ENCODE measurements at regions of chr18 and their contacts with region 1.

Region 1: GRCh38 chr18:57434536-57435494 is at the start of gene ONECUT2:
- DNase-seq: peak; percentile 100
- H3K4me3 Mint-ChIP-seq: peak within 1 kb of the TSS; percentile 96
- H3K27ac Mint-ChIP-seq: peak within 1 kb of the TSS; percentile 79
- H3K4me1 Mint-ChIP-seq: no peaks in the 10 kb centered on the region
- H3K27me3 Mint-ChIP-seq: no peaks in the 10 kb centered on the region
- CTCF ChIP-seq: no peak
- total RNA-seq, gene ONECUT2: 182 and 209 TPM in 2 replicates

Region 2: DNA sequence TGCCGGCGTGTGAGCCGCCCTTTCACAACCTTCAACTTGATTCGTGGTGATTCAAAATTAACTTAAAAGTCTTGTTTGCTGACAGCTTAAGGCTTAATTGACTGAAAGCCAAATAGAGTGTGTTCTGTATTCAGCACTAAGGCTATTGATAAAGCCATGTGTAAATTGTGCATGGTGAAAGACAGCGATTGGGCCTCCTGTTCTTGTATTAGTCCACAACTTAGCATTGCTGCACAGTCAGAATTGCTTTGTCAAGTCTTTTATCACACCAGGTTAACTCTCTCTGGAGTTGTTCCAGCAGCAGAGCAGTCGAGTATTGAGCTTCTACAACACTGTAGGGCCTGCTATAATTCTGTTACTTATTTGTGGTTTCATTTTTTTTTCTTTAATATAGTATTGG is 573.6 kb before region 1 on chr18:
- CTCF ChIA-PET with region 1: interaction called, 5 read pairs
- intact Hi-C with region 1: loop called (anchors 2 kb)
- DNase-seq: peak; percentile 41
- H3K4me3 Mint-ChIP-seq: peak overlapping the region; percentile 37
- H3K27ac Mint-ChIP-seq: peak overlapping the region; percentile 33
- H3K4me1 Mint-ChIP-seq: peaks cover 17% of the 10 kb centered on the region
- H3K27me3 Mint-ChIP-seq: no peaks in the 10 kb centered on the region
- CTCF ChIP-seq: no peak

Region 3: DNA sequence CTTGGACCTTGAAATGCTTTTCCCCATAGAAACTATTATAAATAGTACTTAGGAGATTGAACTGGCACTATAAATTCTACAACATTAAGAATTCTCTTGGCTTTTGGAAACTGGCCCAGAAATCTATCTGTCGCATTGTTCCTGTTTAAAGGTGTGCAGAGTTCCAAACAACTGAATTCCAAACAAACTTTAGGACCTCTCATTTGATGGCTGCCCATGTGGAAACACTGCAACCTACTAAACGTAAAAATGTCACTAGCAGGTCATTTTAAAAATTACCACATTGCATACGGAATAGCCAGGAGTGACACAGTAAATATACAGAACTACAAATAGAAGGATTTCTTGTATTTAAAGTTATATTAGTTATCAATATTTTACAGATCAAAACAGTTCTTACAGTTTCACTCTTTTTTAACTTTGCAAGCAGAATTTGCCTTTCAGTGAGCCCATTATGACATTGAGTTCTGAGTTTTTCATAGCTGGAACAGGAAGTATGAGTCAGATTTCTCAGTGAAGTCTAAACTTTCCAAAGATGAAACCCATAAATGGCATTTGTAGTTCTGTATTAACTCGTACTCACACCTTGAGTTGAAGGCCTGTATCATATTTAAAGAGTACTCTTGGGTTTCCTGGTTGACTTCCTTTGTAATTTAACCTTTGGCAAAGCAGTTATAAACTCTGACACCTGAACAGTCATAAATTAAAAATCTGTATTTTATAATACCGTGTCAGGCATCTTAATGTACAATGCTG is 430.3 kb before region 1 on chr18:
- CTCF ChIA-PET with region 1: no interaction called
- intact Hi-C with region 1: loop called (anchors 5 kb)
- DNase-seq: no peak
- H3K4me3 Mint-ChIP-seq: peak overlapping the region; percentile 39
- H3K27ac Mint-ChIP-seq: peak overlapping the region; percentile 87
- H3K4me1 Mint-ChIP-seq: peaks cover 34% of the 10 kb centered on the region
- H3K27me3 Mint-ChIP-seq: no peaks in the 10 kb centered on the region
- CTCF ChIP-seq: no peak

Region 4: GRCh38 chr18:57051657-57052044 is 383.2 kb before region 1 on chr18:
- CTCF ChIA-PET with region 1: no interaction called
- intact Hi-C with region 1: loop called (anchors 2 kb)
- DNase-seq: peak; percentile 59
- H3K4me3 Mint-ChIP-seq: no peak overlapping the region
- H3K27ac Mint-ChIP-seq: peak overlapping the region; percentile 95
- H3K4me1 Mint-ChIP-seq: peaks cover 30% of the 10 kb centered on the region
- H3K27me3 Mint-ChIP-seq: no peaks in the 10 kb centered on the region
- CTCF ChIP-seq: no peak

Region 5: DNA sequence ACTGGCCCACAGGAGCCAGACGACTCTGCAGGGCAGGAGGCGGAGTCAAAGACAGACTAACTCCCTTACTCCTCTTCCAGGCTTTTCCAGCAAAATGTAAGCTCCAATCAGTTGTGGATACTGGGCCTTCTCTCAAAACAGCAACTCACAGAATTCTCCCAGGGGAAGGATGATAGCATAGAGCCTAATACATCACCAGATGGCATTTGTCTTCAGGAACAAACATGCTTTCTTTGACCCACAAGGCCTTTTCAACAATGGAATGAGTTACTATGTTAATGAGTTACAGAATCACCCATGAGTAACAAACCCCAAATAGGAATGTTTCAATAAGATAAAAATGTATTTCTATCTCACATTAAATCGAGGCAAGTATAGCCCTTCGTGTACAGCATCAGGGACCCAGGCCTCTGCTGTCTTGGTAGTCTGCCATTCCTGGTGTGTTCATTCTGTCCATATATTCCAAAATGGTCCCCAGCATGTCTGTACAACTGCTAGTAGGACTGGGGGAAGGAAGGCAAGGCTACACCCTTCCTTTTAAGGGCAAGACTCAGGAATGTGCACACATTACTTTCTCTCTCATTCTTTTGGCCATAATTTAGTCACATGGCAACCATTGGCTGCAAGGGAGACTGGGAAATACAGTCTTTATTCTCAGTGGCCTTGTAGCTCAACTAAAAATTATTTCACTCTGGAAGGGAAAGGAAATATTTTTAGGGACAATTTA is 211.5 kb before region 1 on chr18:
- CTCF ChIA-PET with region 1: no interaction called
- intact Hi-C with region 1: loop called (anchors 1 kb)
- DNase-seq: peak; percentile 50
- H3K4me3 Mint-ChIP-seq: peak overlapping the region; percentile 7
- H3K27ac Mint-ChIP-seq: peak overlapping the region; percentile 82
- H3K4me1 Mint-ChIP-seq: peaks cover 34% of the 10 kb centered on the region
- H3K27me3 Mint-ChIP-seq: no peaks in the 10 kb centered on the region
- CTCF ChIP-seq: no peak

Region 6: DNA sequence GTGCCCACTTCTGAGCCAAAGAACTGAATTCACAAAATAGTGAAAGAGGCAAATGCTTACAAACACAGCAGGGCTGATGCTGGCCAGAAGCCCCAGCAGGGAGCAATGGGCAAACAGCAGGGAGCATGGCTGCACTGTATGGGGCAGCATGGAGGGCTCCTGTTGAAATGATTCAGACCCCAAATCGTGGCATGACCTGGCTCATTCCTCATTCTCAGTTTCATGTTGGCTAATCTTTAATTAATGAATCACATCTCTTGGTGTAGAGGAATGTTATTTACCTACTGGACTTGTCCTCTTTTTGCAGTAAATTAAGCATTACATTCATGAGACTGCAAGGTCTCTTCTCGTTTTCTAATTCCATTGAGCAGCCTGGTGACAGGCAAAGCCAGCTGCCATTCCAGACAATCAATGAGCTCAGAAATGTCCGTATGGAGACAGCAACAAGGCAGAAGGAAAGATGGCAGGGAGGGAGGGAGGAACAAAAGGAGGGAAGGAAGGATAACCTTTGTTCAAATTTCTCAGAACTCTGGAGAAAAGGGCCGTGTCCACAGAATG is 167.4 kb before region 1 on chr18:
- CTCF ChIA-PET with region 1: no interaction called
- intact Hi-C with region 1: loop called (anchors 1 kb)
- DNase-seq: peak; percentile 55
- H3K4me3 Mint-ChIP-seq: peak overlapping the region; percentile 29
- H3K27ac Mint-ChIP-seq: peak overlapping the region; percentile 97
- H3K4me1 Mint-ChIP-seq: peaks cover 68% of the 10 kb centered on the region
- H3K27me3 Mint-ChIP-seq: no peaks in the 10 kb centered on the region
- CTCF ChIP-seq: no peak

Region 7: DNA sequence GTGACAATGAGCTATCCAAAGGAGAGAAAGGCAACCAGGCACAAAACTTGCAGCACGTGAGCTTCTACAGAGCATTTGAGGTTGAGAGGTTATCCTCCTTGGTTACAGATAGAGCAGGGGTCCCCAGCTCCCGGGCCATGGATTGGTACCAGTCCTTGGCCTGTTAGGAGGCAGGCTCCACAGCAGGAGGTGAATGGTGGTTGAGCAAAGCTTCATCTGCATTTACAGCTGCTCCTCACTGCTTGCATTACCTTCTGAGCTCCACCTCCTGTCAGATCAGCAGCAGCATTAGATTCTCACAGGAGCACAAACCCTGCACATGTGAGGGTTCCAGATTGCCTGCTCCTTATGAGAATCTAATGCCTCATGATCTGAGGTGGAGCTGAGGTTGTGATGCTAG is 140.3 kb before region 1 on chr18:
- CTCF ChIA-PET with region 1: no interaction called
- intact Hi-C with region 1: no loop called
- DNase-seq: no peak
- H3K4me3 Mint-ChIP-seq: no peak overlapping the region
- H3K27ac Mint-ChIP-seq: no peak overlapping the region
- H3K4me1 Mint-ChIP-seq: no peaks in the 10 kb centered on the region
- H3K27me3 Mint-ChIP-seq: no peaks in the 10 kb centered on the region
- CTCF ChIP-seq: no peak

Region 8: DNA sequence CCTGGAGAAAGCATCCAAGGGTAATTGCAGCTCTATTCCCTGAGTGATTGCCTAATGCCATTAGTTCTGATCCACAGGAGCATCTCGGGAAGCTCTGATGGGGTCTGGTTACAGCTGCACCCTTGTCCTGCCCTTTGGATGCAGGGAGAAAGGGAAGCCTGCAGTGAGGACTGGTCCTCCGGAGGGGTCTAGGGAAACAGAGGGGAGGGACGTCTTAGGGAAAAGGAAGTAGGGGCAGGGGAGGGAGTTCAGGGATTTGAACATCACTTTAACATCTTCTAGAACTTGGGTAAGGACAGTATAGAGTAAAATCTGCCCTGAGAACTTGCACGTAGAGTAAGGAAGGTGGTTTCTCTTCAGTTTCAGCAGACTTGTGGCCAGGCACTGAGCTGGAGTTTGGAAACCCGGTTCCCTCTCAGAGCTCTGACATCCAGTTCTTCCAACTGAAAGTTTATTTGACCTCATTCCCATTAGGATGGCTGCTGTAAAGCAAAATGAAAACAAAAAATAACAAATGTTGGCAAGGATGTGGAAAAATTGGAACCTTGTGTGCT is 20.8 kb after region 1 on chr18:
- CTCF ChIA-PET with region 1: no interaction called
- intact Hi-C with region 1: no loop called
- DNase-seq: no peak
- H3K4me3 Mint-ChIP-seq: no peak overlapping the region
- H3K27ac Mint-ChIP-seq: peak overlapping the region; percentile 36
- H3K4me1 Mint-ChIP-seq: peaks cover 36% of the 10 kb centered on the region
- H3K27me3 Mint-ChIP-seq: no peaks in the 10 kb centered on the region
- CTCF ChIP-seq: no peak

Region 9: GRCh38 chr18:57497372-57498294 is 62.8 kb after region 1 on chr18:
- CTCF ChIA-PET with region 1: interaction called, 11 read pairs
- intact Hi-C with region 1: no loop called
- DNase-seq: no peak
- H3K4me3 Mint-ChIP-seq: no peak overlapping the region
- H3K27ac Mint-ChIP-seq: no peak overlapping the region
- H3K4me1 Mint-ChIP-seq: no peaks in the 10 kb centered on the region
- H3K27me3 Mint-ChIP-seq: no peaks in the 10 kb centered on the region
- CTCF ChIP-seq: no peak

Measured in Calu3 (cell line).